Ascending aorta (tissue), 2 donors: ENCODE measurements at regions of chr5 and their contacts with region 1.

Region 1: DNA sequence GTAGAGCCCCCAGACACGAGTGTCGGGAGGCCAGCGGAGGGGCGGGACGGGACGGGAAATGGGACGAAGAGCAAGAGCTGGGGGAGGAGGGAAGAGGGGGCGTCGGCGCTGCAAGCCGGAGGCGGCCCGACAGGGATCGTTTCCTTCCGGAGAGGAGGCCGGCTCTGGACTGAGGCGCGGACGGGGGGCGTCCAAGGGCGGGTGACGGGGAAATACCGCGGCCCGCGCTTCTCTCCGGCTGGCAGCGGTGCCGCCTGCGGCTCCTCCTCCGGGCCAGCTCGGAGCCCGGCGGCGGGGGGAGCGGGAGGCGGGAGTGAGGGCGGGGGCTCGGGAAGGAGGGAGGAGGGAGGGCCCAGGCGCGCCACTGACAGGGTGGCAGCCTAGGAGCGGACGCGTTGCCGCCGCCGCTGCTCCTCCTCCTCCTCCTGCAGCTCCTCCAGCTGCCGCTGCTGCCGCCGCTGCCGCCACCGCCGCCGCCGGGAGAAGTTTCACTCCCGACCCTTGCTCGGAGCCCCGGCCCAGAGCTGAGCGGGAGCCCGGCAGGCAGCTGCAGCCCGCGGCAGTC is at the start of gene CHSY3:
- DNase-seq: peak; percentile 36 to 95
- H3K4me3 ChIP-seq: peak within 1 kb of the TSS; percentile 81 to 90
- H3K27ac ChIP-seq: peak within 1 kb of the TSS; percentile 95 to 97
- H3K4me1 ChIP-seq: peaks cover 0 to 4% of the 10 kb centered on the region in 2 donors
- H3K27me3 ChIP-seq: no peaks in the 10 kb centered on the region
- CTCF ChIP-seq: peak in 2 of 3 experiments; percentile 5 to 53
- total RNA-seq, gene CHSY3: 51.3 TPM

Region 2: GRCh38 chr5:129945028-129945427 is 40.8 kb after region 1 on chr5:
- intact Hi-C with region 1: loop called (anchors 5 kb)
- DNase-seq: no peak
- H3K4me3 ChIP-seq: no peak overlapping the region
- H3K27ac ChIP-seq: peak overlapping the region; percentile 54 to 62
- H3K4me1 ChIP-seq: peaks cover 0 to 13% of the 10 kb centered on the region in 2 donors
- H3K27me3 ChIP-seq: no peaks in the 10 kb centered on the region
- CTCF ChIP-seq: no peak

Region 3: GRCh38 chr5:130055572-130055971 is 151.4 kb after region 1 on chr5:
- intact Hi-C with region 1: loop called (anchors 5 kb)
- DNase-seq: peak in 1 of 2 donors; percentile 70
- H3K4me3 ChIP-seq: no peak overlapping the region
- H3K27ac ChIP-seq: peak overlapping the region; percentile 28 to 43
- H3K4me1 ChIP-seq: peaks cover 4 to 5% of the 10 kb centered on the region in 2 donors
- H3K27me3 ChIP-seq: no peaks in the 10 kb centered on the region
- CTCF ChIP-seq: no peak

Region 4: GRCh38 chr5:130109152-130109551 is 205.0 kb after region 1 on chr5:
- intact Hi-C with region 1: loop called (anchors 1 kb)
- DNase-seq: no peak
- H3K4me3 ChIP-seq: no peak overlapping the region
- H3K27ac ChIP-seq: no peak overlapping the region
- H3K4me1 ChIP-seq: no peaks in the 10 kb centered on the region
- H3K27me3 ChIP-seq: no peaks in the 10 kb centered on the region
- CTCF ChIP-seq: peak; percentile 20 to 54 (median 52)

Region 5: DNA sequence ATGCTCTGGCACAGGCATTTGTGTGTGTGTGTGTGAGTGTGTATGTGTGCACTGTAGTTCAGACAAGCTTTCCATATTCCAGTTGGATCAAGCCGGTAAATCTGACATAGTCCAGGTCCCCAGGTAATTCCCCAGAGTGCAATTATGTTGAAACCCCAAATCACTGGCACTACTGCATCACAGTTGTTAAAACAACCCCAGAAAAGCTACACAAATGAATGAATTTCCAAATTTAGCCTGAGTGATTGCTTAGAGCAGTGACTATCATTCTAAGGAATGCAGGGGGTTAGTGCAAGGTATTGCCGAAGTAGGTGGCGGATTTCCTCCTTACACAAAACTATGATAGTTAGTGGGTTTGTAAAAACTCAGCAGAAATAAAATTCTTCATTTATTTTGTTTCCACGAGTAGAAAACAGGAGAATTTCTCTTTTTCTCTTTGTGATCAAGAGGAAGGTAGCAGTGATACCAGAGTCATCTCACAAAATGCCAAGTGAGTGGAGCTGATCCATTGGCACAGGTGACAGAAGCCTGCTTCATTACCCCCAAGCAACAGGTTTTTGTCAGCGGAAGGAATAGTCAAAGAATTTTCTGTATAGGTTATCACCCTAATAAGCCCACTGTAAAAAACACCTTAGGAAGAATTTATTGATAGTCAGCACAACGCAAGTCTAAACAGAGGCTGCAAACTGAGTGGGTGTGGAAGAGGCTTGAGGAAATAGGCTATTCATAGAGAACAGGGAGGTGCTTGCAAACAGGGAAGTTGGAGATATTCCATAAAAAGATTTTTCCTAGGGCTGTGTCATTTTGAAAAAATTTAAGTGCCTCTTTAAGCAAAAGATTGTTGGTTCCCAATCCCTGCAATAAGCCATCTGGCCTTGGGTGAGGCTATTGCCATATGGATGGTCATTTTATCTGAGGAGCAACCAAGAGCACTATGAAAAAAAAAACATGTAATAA is 385.2 kb after region 1 on chr5:
- intact Hi-C with region 1: loop called (anchors 5 kb)
- DNase-seq: peak in 1 of 2 donors; percentile 66
- H3K4me3 ChIP-seq: peak overlapping the region in 1 of 2 donors; percentile 20
- H3K27ac ChIP-seq: peak overlapping the region; percentile 62 to 75
- H3K4me1 ChIP-seq: peaks cover 0 to 25% of the 10 kb centered on the region in 2 donors
- H3K27me3 ChIP-seq: no peaks in the 10 kb centered on the region
- CTCF ChIP-seq: no peak

Region 6: GRCh38 chr5:130720355-130720754 is 816.2 kb after region 1 on chr5:
- intact Hi-C with region 1: loop called (anchors 5 kb)
- DNase-seq: no peak
- H3K4me3 ChIP-seq: no peak overlapping the region
- H3K27ac ChIP-seq: no peak overlapping the region
- H3K4me1 ChIP-seq: no peaks in the 10 kb centered on the region
- H3K27me3 ChIP-seq: no peaks in the 10 kb centered on the region
- CTCF ChIP-seq: peak in 1 of 3 experiments; percentile 48

Region 7: GRCh38 chr5:131263648-131264450 is 1359.7 kb after region 1 on chr5 and contains the start of gene CDC42SE2:
- intact Hi-C with region 1: loop called (anchors 5 kb)
- DNase-seq: peak; percentile 49 to 91
- H3K4me3 ChIP-seq: peak within 1 kb of the TSS; percentile 92 to 97
- H3K27ac ChIP-seq: peak within 1 kb of the TSS; percentile 76 to 85
- H3K4me1 ChIP-seq: peaks cover 0 to 2% of the 10 kb centered on the region in 2 donors
- H3K27me3 ChIP-seq: no peaks in the 10 kb centered on the region
- CTCF ChIP-seq: no peak
- total RNA-seq, gene CDC42SE2: 12.8 TPM